ENCODE measurements at regions of chr3 and their contacts with region 1.

Region 1: GRCh38 chr3:79521238-79521848 is 246.5 kb downstream of the ROBO1 start:
- DNase-seq: no peak
- H3K4me3 Mint-ChIP-seq: no peak overlapping the region
- H3K27ac Mint-ChIP-seq: no peak overlapping the region
- H3K4me1 Mint-ChIP-seq: no peaks in the 10 kb centered on the region
- H3K27me3 Mint-ChIP-seq: no peaks in the 10 kb centered on the region

Region 2: DNA sequence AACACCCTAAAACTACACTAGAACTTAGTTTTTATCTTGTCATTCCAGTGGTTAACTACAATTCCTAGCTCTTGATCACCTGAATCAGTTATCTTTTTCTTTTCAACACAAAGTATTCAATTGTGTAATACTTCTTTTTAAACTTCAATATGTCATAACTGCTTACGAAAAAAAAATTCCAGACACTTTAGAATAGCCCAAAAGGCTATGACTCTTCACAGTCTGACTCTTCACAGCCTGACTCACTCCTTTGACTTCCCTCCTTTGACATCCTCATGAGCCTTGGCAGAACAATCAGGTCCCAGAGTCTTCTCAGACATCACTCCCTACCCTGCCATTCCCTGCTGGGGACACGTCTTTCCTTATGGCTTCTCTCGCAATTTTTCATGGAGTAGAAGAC is 480.6 kb before region 1 on chr3:
- CTCF ChIA-PET with region 1: no interaction called
- intact Hi-C with region 1: no loop called
- DNase-seq: no peak
- H3K4me3 Mint-ChIP-seq: no peak overlapping the region
- H3K27ac Mint-ChIP-seq: no peak overlapping the region
- H3K4me1 Mint-ChIP-seq: no peaks in the 10 kb centered on the region
- H3K27me3 Mint-ChIP-seq: no peaks in the 10 kb centered on the region

Region 3: GRCh38 chr3:79506751-79507150 is 14.6 kb before region 1 on chr3:
- CTCF ChIA-PET with region 1: no interaction called
- intact Hi-C with region 1: no loop called
- DNase-seq: no peak
- H3K4me3 Mint-ChIP-seq: no peak overlapping the region
- H3K27ac Mint-ChIP-seq: no peak overlapping the region
- H3K4me1 Mint-ChIP-seq: no peaks in the 10 kb centered on the region
- H3K27me3 Mint-ChIP-seq: no peaks in the 10 kb centered on the region

Region 4: DNA sequence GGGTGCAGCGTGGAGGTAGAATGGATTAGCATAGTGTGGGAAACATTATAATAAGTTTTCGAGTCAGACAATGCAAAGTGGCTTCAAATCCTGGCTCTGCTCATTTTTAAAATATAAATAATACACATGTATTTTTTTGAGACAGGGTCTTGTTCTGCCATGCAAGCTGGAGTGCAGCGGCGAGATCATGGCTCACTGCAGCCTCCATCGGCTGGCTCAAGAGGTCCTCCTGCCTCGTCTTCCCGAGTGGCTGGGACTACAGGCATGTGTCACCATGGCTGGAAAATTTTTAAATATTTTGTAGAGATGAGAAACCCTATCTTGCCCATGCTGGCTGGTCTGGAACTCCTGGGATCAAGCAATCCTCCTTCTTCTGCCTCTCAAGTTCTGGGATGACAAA is 51.6 kb after region 1 on chr3:
- CTCF ChIA-PET with region 1: no interaction called
- intact Hi-C with region 1: no loop called
- DNase-seq: no peak
- H3K4me3 Mint-ChIP-seq: no peak overlapping the region
- H3K27ac Mint-ChIP-seq: no peak overlapping the region
- H3K4me1 Mint-ChIP-seq: no peaks in the 10 kb centered on the region
- H3K27me3 Mint-ChIP-seq: no peaks in the 10 kb centered on the region

Region 5: GRCh38 chr3:79724203-79724602 is 202.9 kb after region 1 on chr3:
- CTCF ChIA-PET with region 1: no interaction called
- intact Hi-C with region 1: loop called (anchors 1 kb)
- DNase-seq: no peak
- H3K4me3 Mint-ChIP-seq: no peak overlapping the region
- H3K27ac Mint-ChIP-seq: no peak overlapping the region
- H3K4me1 Mint-ChIP-seq: no peaks in the 10 kb centered on the region
- H3K27me3 Mint-ChIP-seq: no peaks in the 10 kb centered on the region

Region 6: DNA sequence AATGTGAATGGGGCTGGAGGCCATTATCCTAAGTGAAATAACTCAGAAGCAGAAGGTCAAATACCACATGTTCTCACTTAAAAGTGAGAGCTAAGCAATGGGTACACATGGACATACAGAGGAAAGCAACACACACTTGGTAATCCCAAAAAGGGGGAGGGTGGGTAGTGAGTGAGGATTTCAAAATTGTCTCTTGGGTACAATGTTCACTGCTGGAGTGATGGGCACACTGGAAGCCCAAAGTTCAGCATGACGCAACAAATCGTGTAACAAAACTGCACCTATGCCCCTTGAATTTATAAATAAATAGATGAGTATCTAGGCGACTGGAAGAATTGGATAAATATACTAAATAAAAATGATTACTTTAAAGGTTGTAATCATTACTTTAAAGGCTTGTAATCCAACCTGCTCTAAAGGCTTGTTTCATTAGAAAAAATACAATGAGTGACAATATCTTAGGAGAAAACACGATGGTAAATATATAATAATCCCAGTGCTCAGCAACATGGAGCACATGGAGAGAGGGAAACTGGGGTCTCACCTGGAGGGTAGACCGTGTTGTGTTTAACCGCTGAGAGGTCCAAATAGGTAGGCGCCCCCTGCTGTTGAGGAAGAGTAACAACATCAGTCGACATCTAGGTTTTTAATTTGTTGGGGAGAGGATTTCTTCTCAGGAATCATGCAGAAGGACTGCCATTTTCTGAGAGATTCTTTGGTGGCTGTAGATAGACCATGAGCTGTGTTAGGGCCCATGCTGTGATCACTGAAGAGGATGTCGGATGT is 325.0 kb after region 1 on chr3:
- CTCF ChIA-PET with region 1: no interaction called
- intact Hi-C with region 1: loop called (anchors 1 kb)
- DNase-seq: peak; percentile 6
- H3K4me3 Mint-ChIP-seq: no peak overlapping the region
- H3K27ac Mint-ChIP-seq: no peak overlapping the region
- H3K4me1 Mint-ChIP-seq: no peaks in the 10 kb centered on the region
- H3K27me3 Mint-ChIP-seq: no peaks in the 10 kb centered on the region

Region 7: DNA sequence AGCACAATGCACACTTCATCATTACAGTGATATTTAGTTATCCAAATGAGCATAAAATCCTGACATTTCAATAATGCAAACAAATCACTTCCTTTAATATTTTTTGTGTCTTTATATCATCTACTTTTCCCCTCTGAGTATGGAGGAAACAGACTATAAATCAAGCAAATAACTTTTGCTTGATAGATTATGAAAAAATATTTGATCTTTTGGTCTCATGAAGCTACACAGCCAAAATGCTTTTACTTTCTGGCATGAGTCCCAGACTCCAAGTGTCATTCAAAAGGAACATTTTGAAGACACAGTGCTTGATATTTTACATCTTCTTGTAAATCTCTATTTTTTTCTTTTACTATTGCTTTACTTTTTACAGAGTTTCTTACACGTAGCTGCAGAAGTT is 461.8 kb after region 1 on chr3:
- CTCF ChIA-PET with region 1: no interaction called
- intact Hi-C with region 1: no loop called
- DNase-seq: no peak
- H3K4me3 Mint-ChIP-seq: no peak overlapping the region
- H3K27ac Mint-ChIP-seq: no peak overlapping the region
- H3K4me1 Mint-ChIP-seq: no peaks in the 10 kb centered on the region
- H3K27me3 Mint-ChIP-seq: no peaks in the 10 kb centered on the region

Region 8: DNA sequence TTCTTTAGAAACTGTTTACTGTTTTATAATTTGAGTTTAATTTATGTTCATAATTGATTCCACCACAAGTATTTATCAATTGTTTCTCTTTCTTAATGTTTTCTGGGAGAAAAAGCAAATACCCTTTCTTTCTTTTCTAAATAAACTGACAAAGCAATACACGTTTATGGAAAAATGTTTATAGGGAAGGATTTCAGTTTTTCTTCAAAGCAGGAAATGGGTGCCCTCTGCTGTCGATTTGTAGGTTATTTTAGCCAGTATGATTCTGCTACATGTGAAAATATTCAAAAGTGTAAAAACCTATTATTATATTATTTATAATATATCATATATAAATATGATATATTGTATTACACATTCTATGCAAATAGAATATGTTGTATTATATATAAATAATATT is 1167.5 kb after region 1 on chr3:
- CTCF ChIA-PET with region 1: no interaction called
- intact Hi-C with region 1: loop called (anchors 5 kb)
- DNase-seq: no peak
- H3K4me3 Mint-ChIP-seq: no peak overlapping the region
- H3K27ac Mint-ChIP-seq: no peak overlapping the region
- H3K4me1 Mint-ChIP-seq: no peaks in the 10 kb centered on the region
- H3K27me3 Mint-ChIP-seq: no peaks in the 10 kb centered on the region

Region 9: GRCh38 chr3:81242871-81243270 is 1721.5 kb after region 1 on chr3:
- CTCF ChIA-PET with region 1: no interaction called
- intact Hi-C with region 1: loop called (anchors 5 kb)
- DNase-seq: no peak
- H3K4me3 Mint-ChIP-seq: no peak overlapping the region
- H3K27ac Mint-ChIP-seq: no peak overlapping the region
- H3K4me1 Mint-ChIP-seq: no peaks in the 10 kb centered on the region
- H3K27me3 Mint-ChIP-seq: no peaks in the 10 kb centered on the region